Activated CD8-positive, alpha-beta T cell treated with anti-CD3 and anti-CD28 coated beads for 36 hours (primary cell): ENCODE measurements at regions of chr19 and their contacts with region 1.

Region 1: DNA sequence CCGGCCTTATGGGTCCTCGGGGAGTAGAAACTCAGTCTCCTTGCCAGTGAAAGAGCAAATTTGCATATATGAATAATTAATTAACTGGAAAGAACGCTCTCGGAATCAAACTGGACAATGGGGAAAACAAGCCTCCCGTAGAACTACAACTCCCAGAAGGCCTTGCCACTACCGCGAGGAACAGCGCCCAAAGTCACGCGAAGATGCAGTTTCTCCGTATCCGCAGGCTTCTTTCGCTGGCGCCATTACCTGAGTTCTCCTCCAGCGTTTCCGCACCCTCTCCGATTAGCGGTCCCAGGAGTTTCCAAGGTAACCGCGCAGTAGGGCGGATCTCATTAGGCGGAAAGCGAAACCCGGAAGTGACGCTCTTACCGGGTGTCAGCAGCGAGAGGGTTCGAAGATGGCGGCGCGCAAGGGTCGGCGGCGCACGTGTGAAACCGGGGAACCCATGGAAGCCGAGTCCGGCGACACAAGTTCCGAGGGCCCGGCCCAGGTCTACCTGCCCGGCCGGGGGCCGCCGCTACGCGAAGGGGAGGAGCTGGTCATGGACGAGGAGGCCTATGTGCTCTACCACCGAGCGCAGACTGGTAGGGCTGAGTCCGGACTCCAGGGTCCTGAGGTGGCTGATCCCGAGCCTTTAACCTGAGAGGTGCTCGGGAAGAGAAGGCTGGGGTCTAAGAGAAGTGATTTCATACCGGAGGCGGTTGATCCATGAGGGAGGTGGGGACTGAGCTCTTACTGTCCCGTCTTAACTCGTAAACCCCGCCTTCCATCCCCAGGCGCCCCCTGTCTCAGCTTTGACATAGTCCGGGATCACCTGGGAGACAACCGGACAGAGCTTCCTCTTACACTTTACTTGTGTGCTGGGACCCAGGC is at the start of gene GRWD1:
- DNase-seq: peak; percentile 98
- ATAC-seq: peak; percentile 95
- H3K4me3 Mint-ChIP-seq: peak within 1 kb of the TSS; percentile 79
- H3K27ac Mint-ChIP-seq: peak within 1 kb of the TSS; percentile 89
- H3K4me1 Mint-ChIP-seq: peaks cover 32% of the 10 kb centered on the region
- H3K27me3 Mint-ChIP-seq: peaks cover 19% of the 10 kb centered on the region
- CTCF ChIP-seq: no peak
- total RNA-seq, gene GRWD1: 49.4 to 50.1 TPM

Region 2: DNA sequence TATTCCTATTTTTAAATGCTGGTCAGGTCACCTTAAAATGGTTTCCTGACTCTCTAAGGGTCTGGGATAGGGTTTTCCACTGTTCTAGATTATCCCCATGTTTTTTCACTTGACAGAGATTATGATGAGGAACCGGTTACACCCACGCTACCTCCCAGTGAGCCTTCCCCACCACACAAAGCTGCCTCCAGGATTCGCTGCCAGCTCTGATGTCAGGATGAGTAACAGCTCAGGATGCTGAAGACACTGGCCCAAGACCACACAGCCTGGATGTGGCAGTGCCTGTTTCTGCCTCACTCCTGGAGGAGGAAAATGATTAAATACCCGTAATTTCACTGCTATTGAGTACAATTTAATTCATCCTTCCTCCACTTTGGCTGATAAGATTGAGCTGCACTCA is 153.0 kb before region 1 on chr19:
- CTCF ChIA-PET with region 1: no interaction called
- POLR2A ChIA-PET with region 1: no interaction called
- intact Hi-C with region 1: no loop called
- DNase-seq: no peak
- ATAC-seq: no peak
- H3K4me3 Mint-ChIP-seq: no peak overlapping the region
- H3K27ac Mint-ChIP-seq: no peak overlapping the region
- H3K4me1 Mint-ChIP-seq: peaks cover 8% of the 10 kb centered on the region
- H3K27me3 Mint-ChIP-seq: no peaks in the 10 kb centered on the region
- CTCF ChIP-seq: no peak

Region 3: GRCh38 chr19:48458016-48458415 is 12.2 kb after region 1 on chr19:
- CTCF ChIA-PET with region 1: no interaction called
- POLR2A ChIA-PET with region 1: interaction called, 17 read pairs
- intact Hi-C with region 1: no loop called
- DNase-seq: no peak
- ATAC-seq: no peak
- H3K4me3 Mint-ChIP-seq: no peak overlapping the region
- H3K27ac Mint-ChIP-seq: no peak overlapping the region
- H3K4me1 Mint-ChIP-seq: peaks cover 10% of the 10 kb centered on the region
- H3K27me3 Mint-ChIP-seq: no peaks in the 10 kb centered on the region
- CTCF ChIP-seq: no peak

Region 4: GRCh38 chr19:48480558-48481500 is 35.0 kb after region 1 on chr19:
- CTCF ChIA-PET with region 1: interaction called, 4 read pairs
- POLR2A ChIA-PET with region 1: interaction called, 11 read pairs
- intact Hi-C with region 1: no loop called
- DNase-seq: peak; percentile 65
- ATAC-seq: peak; percentile 81
- H3K4me3 Mint-ChIP-seq: peak overlapping the region; percentile 77
- H3K27ac Mint-ChIP-seq: peak overlapping the region; percentile 75
- H3K4me1 Mint-ChIP-seq: peaks cover 23% of the 10 kb centered on the region
- H3K27me3 Mint-ChIP-seq: no peaks in the 10 kb centered on the region
- CTCF ChIP-seq: no peak

Region 5: DNA sequence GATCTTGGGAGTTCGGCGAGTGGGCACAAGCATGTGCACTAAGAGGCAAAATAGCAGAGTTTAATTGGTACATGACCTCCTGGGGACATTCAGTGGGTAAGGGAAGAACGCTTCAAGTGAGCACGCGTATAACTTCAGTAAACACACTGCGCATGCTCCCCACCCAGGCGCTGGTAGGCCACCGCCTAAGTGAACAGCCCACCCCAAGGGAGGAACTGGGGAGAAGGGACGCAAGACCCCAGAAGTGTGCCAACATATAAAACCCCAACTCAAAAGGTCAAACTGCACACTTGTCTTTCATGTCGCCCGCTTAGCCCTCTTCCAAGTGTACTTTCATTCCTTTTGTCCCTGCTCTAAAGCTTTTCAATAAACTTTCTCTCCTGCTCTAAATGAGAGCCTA is 237.5 kb after region 1 on chr19:
- CTCF ChIA-PET with region 1: no interaction called
- POLR2A ChIA-PET with region 1: no interaction called
- intact Hi-C with region 1: no loop called
- DNase-seq: peak; percentile 41
- ATAC-seq: peak; percentile 37
- H3K4me3 Mint-ChIP-seq: peak overlapping the region; percentile 17
- H3K27ac Mint-ChIP-seq: no peak overlapping the region
- H3K4me1 Mint-ChIP-seq: no peaks in the 10 kb centered on the region
- H3K27me3 Mint-ChIP-seq: no peaks in the 10 kb centered on the region
- CTCF ChIP-seq: no peak

Region 6: DNA sequence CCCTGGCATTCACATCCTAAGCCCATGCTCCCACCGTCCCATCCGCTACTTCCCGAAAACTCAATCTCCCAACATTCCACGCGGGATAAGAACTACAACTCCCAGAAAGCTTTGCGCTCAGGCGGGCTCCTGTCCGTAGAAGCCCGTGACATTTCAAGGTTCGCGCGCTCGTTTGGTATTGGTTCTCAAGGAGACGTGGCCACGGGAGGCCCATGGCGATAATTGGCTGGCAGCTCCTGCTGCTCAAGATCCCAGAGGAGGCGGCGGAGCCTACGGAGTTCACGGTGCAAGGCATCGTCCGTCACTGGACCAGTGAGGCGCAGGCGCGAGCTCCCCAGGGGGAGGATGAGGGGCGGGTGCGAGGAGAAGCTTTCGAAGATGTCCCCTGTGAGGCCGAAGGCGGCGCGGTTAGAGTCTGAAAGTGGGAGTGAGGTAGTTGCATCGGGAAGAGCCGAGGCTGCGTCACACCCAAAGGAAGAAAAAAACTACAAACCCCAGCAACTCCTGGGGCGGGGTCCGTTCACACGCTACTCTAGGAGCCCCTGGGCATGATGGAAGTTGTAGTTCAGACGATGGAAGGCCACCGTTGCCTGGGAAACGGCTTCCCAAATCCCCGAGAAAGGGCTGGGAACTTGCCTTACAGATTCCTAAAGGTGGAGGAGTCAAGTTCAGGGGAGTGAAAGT is 274.9 kb after region 1 on chr19:
- CTCF ChIA-PET with region 1: no interaction called
- POLR2A ChIA-PET with region 1: no interaction called
- intact Hi-C with region 1: no loop called
- DNase-seq: peak; percentile 98
- ATAC-seq: peak; percentile 94
- H3K4me3 Mint-ChIP-seq: peak overlapping the region; percentile 92
- H3K27ac Mint-ChIP-seq: peak overlapping the region; percentile 99
- H3K4me1 Mint-ChIP-seq: peaks cover 13% of the 10 kb centered on the region
- H3K27me3 Mint-ChIP-seq: no peaks in the 10 kb centered on the region
- CTCF ChIP-seq: no peak